ENCODE measurements at regions of chr3 and their contacts with region 1.

Region 1: GRCh38 chr3:136196401-136197158 is 445 bp upstream of the MSL2 start:
- DNase-seq: peak; percentile 100
- H3K4me3 Mint-ChIP-seq: peak overlapping the region; percentile 95
- H3K27ac Mint-ChIP-seq: peak overlapping the region; percentile 99
- H3K4me1 Mint-ChIP-seq: peaks cover 18% of the 10 kb centered on the region
- H3K27me3 Mint-ChIP-seq: peaks cover 5% of the 10 kb centered on the region

Region 2: GRCh38 chr3:136149667-136150066 is 46.9 kb before region 1 on chr3:
- CTCF ChIA-PET with region 1: interaction called, 3 read pairs
- POLR2A ChIA-PET with region 1: interaction called, 3 read pairs
- intact Hi-C with region 1: loop called (anchors 1 kb)
- DNase-seq: no peak
- H3K4me3 Mint-ChIP-seq: peak overlapping the region; percentile 17
- H3K27ac Mint-ChIP-seq: peak overlapping the region; percentile 88
- H3K4me1 Mint-ChIP-seq: peaks cover 69% of the 10 kb centered on the region
- H3K27me3 Mint-ChIP-seq: no peaks in the 10 kb centered on the region

Region 3: GRCh38 chr3:136171097-136171542 is 25.5 kb before region 1 on chr3:
- CTCF ChIA-PET with region 1: interaction called, 3 read pairs
- POLR2A ChIA-PET with region 1: interaction called, 9 read pairs
- intact Hi-C with region 1: loop called (anchors 1 kb)
- DNase-seq: peak; percentile 51
- H3K4me3 Mint-ChIP-seq: no peak overlapping the region
- H3K27ac Mint-ChIP-seq: no peak overlapping the region
- H3K4me1 Mint-ChIP-seq: peaks cover 42% of the 10 kb centered on the region
- H3K27me3 Mint-ChIP-seq: no peaks in the 10 kb centered on the region

Region 4: GRCh38 chr3:136267235-136267634 is 70.7 kb after region 1 on chr3:
- CTCF ChIA-PET with region 1: no interaction called
- POLR2A ChIA-PET with region 1: no interaction called
- intact Hi-C with region 1: no loop called
- DNase-seq: no peak
- H3K4me3 Mint-ChIP-seq: no peak overlapping the region
- H3K27ac Mint-ChIP-seq: no peak overlapping the region
- H3K4me1 Mint-ChIP-seq: peaks cover 29% of the 10 kb centered on the region
- H3K27me3 Mint-ChIP-seq: no peaks in the 10 kb centered on the region

Region 5: DNA sequence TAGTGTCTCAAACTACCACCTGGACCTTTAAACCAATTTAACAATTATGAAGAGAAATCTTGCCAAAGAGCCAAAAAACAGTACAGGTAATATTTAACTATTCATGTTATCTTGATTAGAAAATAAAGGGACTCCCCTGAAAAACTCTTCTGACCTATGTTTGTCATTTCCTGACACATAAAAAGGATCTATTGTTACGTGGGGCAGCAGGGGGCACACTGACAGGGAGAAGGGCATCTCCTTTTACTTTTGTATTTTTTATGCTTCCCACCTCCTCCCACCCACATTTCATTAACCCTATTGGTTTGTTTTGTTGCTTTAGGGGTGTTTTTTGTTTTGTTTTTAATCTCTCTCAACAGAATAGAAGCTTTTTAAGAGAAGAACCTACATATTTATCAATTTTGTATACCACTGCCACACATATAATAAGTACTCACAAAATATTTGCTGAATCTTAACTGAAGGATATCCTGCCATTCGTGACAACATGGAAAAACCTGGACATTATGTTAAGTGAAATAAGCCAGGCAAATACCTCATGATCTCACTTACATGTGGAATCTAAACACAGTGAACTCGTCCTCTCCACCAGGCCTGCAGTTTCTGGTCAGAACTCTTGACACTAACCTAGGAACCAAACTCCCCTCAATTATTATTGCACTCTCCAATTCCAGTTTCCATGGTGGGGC is 537.9 kb after region 1 on chr3:
- CTCF ChIA-PET with region 1: no interaction called
- POLR2A ChIA-PET with region 1: no interaction called
- intact Hi-C with region 1: loop called (anchors 5 kb)
- DNase-seq: no peak
- H3K4me3 Mint-ChIP-seq: no peak overlapping the region
- H3K27ac Mint-ChIP-seq: no peak overlapping the region
- H3K4me1 Mint-ChIP-seq: peaks cover 55% of the 10 kb centered on the region
- H3K27me3 Mint-ChIP-seq: no peaks in the 10 kb centered on the region

Region 6: DNA sequence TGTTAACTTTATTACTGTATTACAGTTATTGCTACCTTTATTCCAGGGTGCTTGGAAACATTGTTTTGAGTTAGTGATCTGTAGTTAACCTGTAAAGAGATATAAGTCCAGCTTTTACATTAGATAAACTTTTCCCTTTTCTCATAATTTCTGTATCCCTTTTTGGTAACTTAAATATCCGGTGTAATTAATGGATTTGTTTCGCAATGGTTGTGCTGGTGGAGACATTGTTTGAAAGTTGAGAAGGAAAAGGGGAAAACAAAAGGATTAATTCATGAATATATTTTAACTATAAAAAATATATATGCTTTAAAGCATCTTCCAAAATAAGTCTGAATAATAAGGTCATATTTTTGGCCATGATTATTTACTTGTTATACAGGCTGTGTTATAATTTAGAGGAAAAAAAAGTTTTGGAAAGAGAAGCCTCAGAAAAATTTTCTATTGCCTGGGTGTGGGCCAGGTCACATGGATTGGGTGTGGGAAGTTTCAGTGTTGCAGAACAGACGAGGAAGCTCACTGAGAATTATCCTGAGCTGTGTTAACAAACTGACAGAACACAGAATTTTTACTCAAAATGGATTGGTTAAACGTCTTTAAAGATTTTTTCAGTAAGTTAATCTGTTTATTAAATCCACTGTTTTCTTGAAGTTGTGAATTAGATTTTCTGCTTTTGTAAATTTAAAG is 733.5 kb after region 1 on chr3:
- CTCF ChIA-PET with region 1: no interaction called
- POLR2A ChIA-PET with region 1: no interaction called
- intact Hi-C with region 1: loop called (anchors 10 kb)
- DNase-seq: no peak
- H3K4me3 Mint-ChIP-seq: no peak overlapping the region
- H3K27ac Mint-ChIP-seq: no peak overlapping the region
- H3K4me1 Mint-ChIP-seq: peaks cover 54% of the 10 kb centered on the region
- H3K27me3 Mint-ChIP-seq: no peaks in the 10 kb centered on the region

Measured in activated CD4-positive, alpha-beta memory T cell treated with anti-CD3 and anti-CD28 coated beads for 36 hours (primary cell).